HCT116 (cell line): ENCODE measurements at regions of chr9 and their contacts with region 1.

Region 1: GRCh38 chr9:36728651-36729520 is 156.2 kb downstream of the MELK start:
- DNase-seq: peak; percentile 57
- ATAC-seq: peak; percentile 96
- H3K4me3 ChIP-seq: no peak overlapping the region
- H3K27ac ChIP-seq: no peak overlapping the region
- H3K4me1 ChIP-seq: no peaks in the 10 kb centered on the region
- H3K27me3 ChIP-seq: no peaks in the 10 kb centered on the region
- CTCF ChIP-seq: peak; percentile 83 to 93 (median 91)
- POLR2A ChIP-seq: no peak
- RAD21 ChIP-seq: peak; percentile 91

Region 2: DNA sequence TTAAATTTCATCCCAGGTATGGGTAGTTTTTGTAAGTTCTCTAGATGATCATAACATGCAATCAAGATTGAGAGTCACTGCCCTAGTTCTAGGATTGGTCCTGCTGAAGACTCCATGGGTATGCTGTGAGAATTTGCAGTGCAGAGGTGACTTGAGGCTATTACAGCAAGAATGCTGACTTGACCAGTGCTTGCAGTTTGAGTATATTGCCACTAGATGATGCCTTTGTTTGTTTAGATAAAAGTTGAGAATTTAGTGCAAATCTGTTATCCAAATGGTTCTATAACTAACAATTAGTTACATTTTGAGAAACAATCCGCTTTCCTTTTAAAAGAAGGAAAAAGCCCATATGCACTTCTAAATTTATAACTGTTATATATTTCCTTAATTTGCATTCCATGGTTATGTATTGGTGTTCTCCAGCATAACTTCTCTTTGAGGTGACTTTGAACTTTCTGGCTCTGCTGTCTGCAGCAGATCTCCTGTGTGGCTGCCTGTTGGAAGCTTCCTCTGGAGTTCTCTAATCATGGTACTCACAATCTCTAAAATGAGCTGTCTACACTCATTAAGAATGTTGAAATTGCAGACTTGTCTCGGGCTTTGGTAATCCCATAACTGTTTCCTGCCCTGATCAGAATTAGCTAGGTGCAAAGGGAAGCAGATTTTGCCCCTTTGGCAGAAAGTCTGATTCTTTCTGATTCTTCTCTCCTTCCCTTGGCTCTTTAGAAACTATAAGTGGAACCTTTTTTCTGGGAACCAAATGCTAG is 131.3 kb before region 1 on chr9:
- CTCF ChIA-PET with region 1: interaction called, 4 read pairs
- POLR2A ChIA-PET with region 1: no interaction called
- RAD21 ChIA-PET with region 1: no interaction called
- intact Hi-C with region 1: loop called (anchors 1 kb)
- DNase-seq: peak; percentile 32
- ATAC-seq: peak; percentile 95
- H3K4me3 ChIP-seq: no peak overlapping the region
- H3K27ac ChIP-seq: no peak overlapping the region
- H3K4me1 ChIP-seq: no peaks in the 10 kb centered on the region
- H3K27me3 ChIP-seq: no peaks in the 10 kb centered on the region
- CTCF ChIP-seq: peak; percentile 41 to 72 (median 65); a peak in 5 of 6 replicates
- POLR2A ChIP-seq: no peak
- RAD21 ChIP-seq: peak; percentile 25; the same call in 1 of the 2 replicates

Region 3: GRCh38 chr9:36632892-36633291 is 96.0 kb before region 1 on chr9:
- CTCF ChIA-PET with region 1: interaction called, 30 read pairs
- POLR2A ChIA-PET with region 1: no interaction called
- RAD21 ChIA-PET with region 1: no interaction called
- intact Hi-C with region 1: loop called (anchors 1 kb)
- DNase-seq: peak; percentile 7
- ATAC-seq: peak; percentile 70
- H3K4me3 ChIP-seq: no peak overlapping the region
- H3K27ac ChIP-seq: no peak overlapping the region
- H3K4me1 ChIP-seq: no peaks in the 10 kb centered on the region
- H3K27me3 ChIP-seq: no peaks in the 10 kb centered on the region
- CTCF ChIP-seq: peak; percentile 43 to 72 (median 47); a peak in 5 of 6 replicates
- POLR2A ChIP-seq: no peak
- RAD21 ChIP-seq: peak; percentile 58

Region 4: GRCh38 chr9:36764364-36765076 is 35.6 kb after region 1 on chr9:
- CTCF ChIA-PET with region 1: no interaction called
- POLR2A ChIA-PET with region 1: no interaction called
- RAD21 ChIA-PET with region 1: no interaction called
- intact Hi-C with region 1: no loop called
- DNase-seq: no peak
- ATAC-seq: no peak
- H3K4me3 ChIP-seq: peak overlapping the region in 1 of 2 experiments; percentile 73; a peak in 2 of 4 replicates
- H3K27ac ChIP-seq: peak overlapping the region; percentile 82
- H3K4me1 ChIP-seq: peaks cover 0 to 20% of the 10 kb centered on the region in 2 experiments; a peak in 1 of 4 replicates
- H3K27me3 ChIP-seq: peaks cover 40% of the 10 kb centered on the region
- CTCF ChIP-seq: no peak
- POLR2A ChIP-seq: no peak
- RAD21 ChIP-seq: no peak

Region 5: DNA sequence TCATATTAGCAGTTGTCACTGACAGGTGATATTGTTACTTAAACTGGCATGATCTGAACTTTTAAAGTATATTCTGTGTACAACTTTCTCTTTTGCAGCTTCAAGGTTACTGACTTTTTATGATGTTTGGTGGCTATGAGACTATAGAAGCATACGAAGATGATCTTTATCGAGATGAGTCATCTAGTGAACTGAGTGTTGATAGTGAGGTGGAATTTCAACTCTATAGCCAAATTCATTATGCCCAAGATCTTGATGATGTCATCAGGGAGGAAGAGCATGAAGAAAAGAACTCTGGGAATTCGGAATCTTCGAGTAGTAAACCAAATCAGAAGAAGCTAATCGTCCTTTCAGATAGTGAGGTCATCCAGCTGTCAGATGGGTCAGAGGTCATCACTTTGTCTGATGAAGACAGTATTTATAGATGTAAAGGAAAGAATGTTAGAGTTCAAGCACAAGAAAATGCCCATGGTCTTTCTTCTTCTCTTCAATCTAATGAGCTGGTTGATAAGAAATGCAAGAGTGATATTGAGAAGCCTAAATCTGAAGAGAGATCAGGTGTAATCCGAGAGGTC is 397.4 kb after region 1 on chr9:
- CTCF ChIA-PET with region 1: no interaction called
- POLR2A ChIA-PET with region 1: no interaction called
- RAD21 ChIA-PET with region 1: no interaction called
- intact Hi-C with region 1: no loop called
- DNase-seq: no peak
- ATAC-seq: no peak
- H3K4me3 ChIP-seq: no peak overlapping the region
- H3K27ac ChIP-seq: no peak overlapping the region
- H3K4me1 ChIP-seq: peaks cover 5% of the 10 kb centered on the region in 2 experiments
- H3K27me3 ChIP-seq: no peaks in the 10 kb centered on the region
- CTCF ChIP-seq: no peak
- POLR2A ChIP-seq: no peak
- RAD21 ChIP-seq: no peak